ENCODE measurements at regions of chr14 and their contacts with region 1.

Region 1: GRCh38 chr14:34227834-34228649 is 234.0 kb downstream of the SPTSSA start:
- DNase-seq: peak; percentile 63 to 80 (median 80)
- ATAC-seq: peak; percentile 94 to 95
- H3K4me3 ChIP-seq: no peak overlapping the region
- H3K27ac ChIP-seq: no peak overlapping the region
- H3K4me1 ChIP-seq: peaks cover 2% of the 10 kb centered on the region
- H3K27me3 ChIP-seq: no peaks in the 10 kb centered on the region

Region 2: GRCh38 chr14:33848706-33849454 is 379.2 kb before region 1 on chr14:
- intact Hi-C with region 1: loop called in 3 of 4 experiments (anchors 5 to 10 kb)
- DNase-seq: peak; percentile 55 to 81 (median 80)
- ATAC-seq: peak; percentile 87 to 95
- H3K4me3 ChIP-seq: no peak overlapping the region
- H3K27ac ChIP-seq: no peak overlapping the region
- H3K4me1 ChIP-seq: no peaks in the 10 kb centered on the region
- H3K27me3 ChIP-seq: no peaks in the 10 kb centered on the region

Region 3: DNA sequence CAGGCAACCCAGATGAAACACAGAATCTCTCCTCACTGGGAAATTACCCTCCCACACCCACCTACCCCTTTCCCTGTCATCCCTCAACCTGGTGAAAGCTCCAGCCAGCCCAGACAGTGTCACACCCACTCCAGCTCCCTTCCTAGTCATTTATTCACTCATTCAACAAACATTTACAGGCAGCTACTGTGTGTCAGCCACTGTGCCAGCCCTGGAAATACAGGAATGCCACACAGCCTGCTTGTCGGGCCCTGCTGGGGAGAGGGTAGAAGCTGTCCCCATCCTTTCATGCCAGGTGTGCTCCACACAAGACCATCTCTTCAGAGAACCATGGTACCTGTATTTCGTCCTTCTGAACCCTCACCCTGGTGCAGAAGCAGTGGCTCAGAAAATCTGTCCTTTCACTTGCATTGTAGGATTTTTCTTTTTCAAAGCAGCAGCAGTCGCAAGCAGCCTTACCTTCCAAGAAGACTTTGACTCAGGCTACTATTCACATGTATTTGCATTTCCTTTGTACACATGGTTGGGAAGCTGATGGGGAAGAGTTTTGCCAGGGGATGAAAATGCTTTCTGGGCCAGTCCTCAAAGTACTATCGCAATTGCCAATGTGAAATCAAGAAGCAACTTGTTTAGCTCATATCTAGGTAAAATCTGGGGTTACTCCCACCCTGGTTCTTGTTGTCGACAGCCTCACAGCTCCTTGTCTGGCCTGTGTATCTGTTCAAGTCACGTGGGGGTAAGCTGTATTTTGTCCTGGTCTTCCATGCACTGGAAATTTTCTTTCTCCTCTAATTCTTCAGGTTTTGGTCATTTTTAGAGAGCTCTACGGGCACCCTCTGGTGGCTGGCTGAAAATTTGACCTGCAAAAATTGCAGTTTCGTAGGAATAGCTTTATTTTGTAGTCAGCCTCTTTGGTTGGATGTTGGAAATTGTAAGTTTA is 129.7 kb before region 1 on chr14:
- intact Hi-C with region 1: loop called in 2 of 4 experiments (anchors 5 to 10 kb)
- DNase-seq: peak in 2 of 3 donors; percentile 62 to 63
- ATAC-seq: peak; percentile 40 to 57
- H3K4me3 ChIP-seq: no peak overlapping the region
- H3K27ac ChIP-seq: no peak overlapping the region
- H3K4me1 ChIP-seq: no peaks in the 10 kb centered on the region
- H3K27me3 ChIP-seq: no peaks in the 10 kb centered on the region